ENCODE measurements at regions of chr3 and their contacts with region 1.

Region 1: DNA sequence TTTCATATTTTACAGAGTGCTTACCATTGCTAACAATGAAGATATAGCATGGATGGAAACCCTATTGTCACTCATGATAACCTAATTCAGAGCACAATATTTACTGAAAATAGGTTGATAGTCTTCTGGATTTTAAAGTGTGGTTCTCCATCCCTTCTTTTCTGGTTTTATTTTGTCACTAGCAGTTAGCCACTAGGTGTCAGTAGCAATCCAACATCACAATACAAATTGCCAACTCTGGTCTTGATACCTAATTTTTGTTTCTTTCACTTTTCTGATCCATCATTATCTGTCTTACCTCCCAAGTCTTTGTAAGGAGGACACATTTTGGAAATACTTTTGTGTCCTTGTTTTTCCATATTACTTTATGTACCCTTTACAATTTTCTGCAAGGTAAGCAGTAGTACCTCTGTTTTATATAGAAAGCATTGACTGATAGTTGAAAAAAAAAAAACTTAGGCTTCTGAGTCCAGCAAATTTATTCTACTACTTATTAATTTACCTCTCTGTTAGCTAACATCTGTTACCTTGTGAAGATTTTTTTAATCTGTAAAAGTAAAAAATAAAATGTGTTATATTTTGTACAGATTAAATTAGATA is 28.3 kb upstream of the CRYBG3 start:
- DNase-seq: peak in 1 of 2 experiments; percentile 27
- H3K4me3 ChIP-seq: no peak overlapping the region
- H3K4me3 Mint-ChIP-seq: no peak overlapping the region
- H3K27ac Mint-ChIP-seq: no peak overlapping the region
- H3K4me1 ChIP-seq: no peaks in the 10 kb centered on the region
- H3K4me1 Mint-ChIP-seq: no peaks in the 10 kb centered on the region
- H3K27me3 ChIP-seq: no peaks in the 10 kb centered on the region
- H3K27me3 Mint-ChIP-seq: no peaks in the 10 kb centered on the region
- CTCF ChIP-seq: peak; percentile 54 to 74

Region 2: GRCh38 chr3:97821810-97822775 is 28.6 kb after region 1 on chr3 and contains the start of gene CRYBG3:
- CTCF ChIA-PET with region 1: no interaction called
- POLR2A ChIA-PET with region 1: no interaction called
- intact Hi-C with region 1: loop called (anchors 1 kb)
- DNase-seq: peak; percentile 59 to 78
- H3K4me3 ChIP-seq: peak within 1 kb of the TSS; percentile 58
- H3K4me3 Mint-ChIP-seq: peak within 1 kb of the TSS; percentile 82
- H3K27ac Mint-ChIP-seq: peak within 1 kb of the TSS; percentile 34
- H3K4me1 ChIP-seq: no peaks in the 10 kb centered on the region
- H3K4me1 Mint-ChIP-seq: peaks cover 8% of the 10 kb centered on the region
- H3K27me3 ChIP-seq: peaks cover 2% of the 10 kb centered on the region; the same call in 1 of the 2 replicates
- H3K27me3 Mint-ChIP-seq: peaks cover 31% of the 10 kb centered on the region
- CTCF ChIP-seq: peak in 1 of 2 experiments; percentile 36
- total RNA-seq, gene CRYBG3: 1.3 TPM in 2 replicates

Region 3: GRCh38 chr3:97895216-97895615 is 101.7 kb after region 1 on chr3:
- CTCF ChIA-PET with region 1: no interaction called
- POLR2A ChIA-PET with region 1: no interaction called
- intact Hi-C with region 1: loop called (anchors 10 kb)
- DNase-seq: no peak
- H3K4me3 ChIP-seq: no peak overlapping the region
- H3K4me3 Mint-ChIP-seq: no peak overlapping the region
- H3K27ac Mint-ChIP-seq: no peak overlapping the region
- H3K4me1 ChIP-seq: no peaks in the 10 kb centered on the region
- H3K4me1 Mint-ChIP-seq: no peaks in the 10 kb centered on the region
- H3K27me3 ChIP-seq: no peaks in the 10 kb centered on the region
- H3K27me3 Mint-ChIP-seq: no peaks in the 10 kb centered on the region
- CTCF ChIP-seq: no peak

Region 4: GRCh38 chr3:97910931-97911351 is 117.4 kb after region 1 on chr3:
- CTCF ChIA-PET with region 1: no interaction called
- POLR2A ChIA-PET with region 1: no interaction called
- intact Hi-C with region 1: no loop called
- DNase-seq: no peak
- H3K4me3 ChIP-seq: no peak overlapping the region
- H3K4me3 Mint-ChIP-seq: peak overlapping the region; percentile 72
- H3K27ac Mint-ChIP-seq: peak overlapping the region; percentile 67
- H3K4me1 ChIP-seq: peaks cover 10% of the 10 kb centered on the region
- H3K4me1 Mint-ChIP-seq: no peaks in the 10 kb centered on the region
- H3K27me3 ChIP-seq: no peaks in the 10 kb centered on the region
- H3K27me3 Mint-ChIP-seq: no peaks in the 10 kb centered on the region
- CTCF ChIP-seq: no peak

Region 5: DNA sequence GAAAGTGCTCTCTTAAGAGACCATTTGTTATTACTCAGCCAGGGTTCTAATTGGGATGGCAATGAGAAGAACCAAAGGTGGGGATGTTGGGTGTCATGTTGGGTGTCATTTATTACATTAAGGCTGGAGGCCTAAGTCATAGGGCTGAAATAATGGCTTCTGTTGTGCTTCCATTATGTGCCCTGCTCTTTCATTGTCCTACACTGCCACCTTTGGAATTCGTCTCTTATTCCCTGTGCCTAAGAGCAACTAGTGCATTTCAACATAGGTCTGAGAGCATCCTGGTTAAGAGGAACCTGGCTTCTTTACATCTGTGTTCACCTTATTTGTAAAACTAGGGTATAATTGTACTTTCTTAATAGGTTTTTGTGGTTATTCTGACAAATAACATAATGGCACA is 146.5 kb after region 1 on chr3:
- CTCF ChIA-PET with region 1: no interaction called
- POLR2A ChIA-PET with region 1: no interaction called
- intact Hi-C with region 1: loop called (anchors 1 kb)
- DNase-seq: peak in 1 of 2 experiments; percentile 13
- H3K4me3 ChIP-seq: no peak overlapping the region
- H3K4me3 Mint-ChIP-seq: no peak overlapping the region
- H3K27ac Mint-ChIP-seq: no peak overlapping the region
- H3K4me1 ChIP-seq: no peaks in the 10 kb centered on the region; the same call in 1 of the 2 replicates
- H3K4me1 Mint-ChIP-seq: no peaks in the 10 kb centered on the region
- H3K27me3 ChIP-seq: no peaks in the 10 kb centered on the region
- H3K27me3 Mint-ChIP-seq: no peaks in the 10 kb centered on the region
- CTCF ChIP-seq: no peak

Region 6: DNA sequence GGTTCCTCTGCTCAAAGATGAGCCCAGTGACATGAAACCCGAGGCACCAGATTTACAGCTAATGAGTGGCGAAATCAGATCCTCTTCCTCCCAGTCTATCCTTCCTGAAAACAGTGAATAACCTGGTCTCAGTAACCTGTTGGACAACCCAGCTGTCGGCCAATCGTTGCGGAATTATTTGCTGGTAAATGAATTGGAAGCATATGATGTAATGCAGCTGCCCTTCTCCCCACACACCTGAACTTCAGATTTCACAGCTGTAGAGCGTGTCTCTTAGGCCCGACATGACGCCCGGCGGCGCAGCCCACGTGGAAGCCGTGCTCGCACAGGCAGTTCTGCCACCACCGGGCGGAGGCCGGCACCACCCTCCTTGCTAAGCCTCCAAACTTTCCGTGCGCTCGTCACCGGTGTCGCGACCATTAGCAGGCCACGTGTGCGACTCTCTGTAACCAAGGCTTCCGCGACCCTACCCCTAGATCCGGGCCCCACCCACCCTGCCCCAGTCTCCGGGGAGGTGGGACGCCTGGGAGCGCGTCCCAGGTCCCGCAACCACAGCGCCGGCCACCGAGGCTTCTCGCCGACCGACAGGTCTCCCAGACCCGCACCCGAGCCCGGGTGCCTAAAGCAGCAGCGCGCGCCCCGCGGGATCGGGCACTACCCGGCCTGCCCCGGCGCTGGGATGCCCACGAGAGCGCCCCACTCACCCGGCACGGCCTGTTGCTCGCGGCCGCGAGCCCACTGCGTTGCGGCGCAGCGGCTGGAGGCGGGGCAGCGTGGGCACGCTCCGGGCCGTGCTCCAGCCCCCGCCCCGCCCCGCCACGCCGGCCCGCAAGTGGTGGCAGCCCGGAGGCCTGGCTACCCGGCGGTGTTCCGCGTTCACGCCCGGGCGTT is 178.4 kb after region 1 on chr3 and contains the start of gene RIOX2:
- CTCF ChIA-PET with region 1: no interaction called
- POLR2A ChIA-PET with region 1: no interaction called
- intact Hi-C with region 1: loop called (anchors 1 kb)
- DNase-seq: peak; percentile 76 to 78
- H3K4me3 ChIP-seq: peak within 1 kb of the TSS; percentile 81
- H3K4me3 Mint-ChIP-seq: peak within 1 kb of the TSS; percentile 88
- H3K27ac Mint-ChIP-seq: peak within 1 kb of the TSS; percentile 94
- H3K4me1 ChIP-seq: peaks cover 20% of the 10 kb centered on the region
- H3K4me1 Mint-ChIP-seq: peaks cover 13% of the 10 kb centered on the region
- H3K27me3 ChIP-seq: no peaks in the 10 kb centered on the region
- H3K27me3 Mint-ChIP-seq: no peaks in the 10 kb centered on the region
- CTCF ChIP-seq: peak in 1 of 2 experiments; percentile 12
- total RNA-seq, gene RIOX2: 25.0 TPM in 2 replicates

Region 7: DNA sequence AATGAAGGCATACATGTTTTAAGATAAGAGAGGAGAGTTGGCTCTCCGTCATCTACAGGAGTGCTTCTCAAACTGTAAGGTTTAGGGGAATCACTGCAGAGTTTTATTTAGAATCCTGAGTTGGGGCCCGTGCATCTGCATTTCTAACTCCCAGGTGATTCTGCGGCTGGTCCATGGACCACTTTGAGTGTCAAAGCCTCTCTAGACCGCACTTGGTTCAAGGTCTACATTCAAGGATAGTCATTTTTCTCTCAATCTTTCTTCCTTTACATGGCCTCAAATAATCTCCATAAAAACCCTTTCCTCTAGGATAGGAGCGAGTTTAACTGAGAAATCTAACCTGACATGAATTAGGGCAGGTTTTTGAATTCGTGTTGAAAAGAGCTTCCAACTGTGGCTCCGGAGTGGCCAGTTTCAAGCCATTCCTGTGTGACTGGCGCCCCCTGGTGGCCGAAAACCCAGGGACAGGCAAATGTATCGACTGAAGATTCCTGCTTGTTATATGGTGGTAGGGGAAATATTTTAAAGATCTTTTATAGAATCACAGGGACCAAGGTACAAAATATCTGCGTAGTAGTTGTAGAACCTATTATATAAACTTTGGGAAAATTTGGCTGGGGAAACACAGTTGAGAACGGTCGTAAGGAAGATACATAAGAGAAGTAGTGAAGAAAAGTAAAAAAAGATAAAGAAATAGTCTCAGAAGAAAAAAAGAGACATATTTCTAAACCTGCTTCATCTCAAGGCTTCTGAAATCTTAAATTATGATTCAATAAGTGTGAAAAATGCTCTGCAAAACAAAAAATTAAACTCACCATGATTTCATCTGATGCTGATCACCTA is 229.7 kb after region 1 on chr3:
- CTCF ChIA-PET with region 1: no interaction called
- POLR2A ChIA-PET with region 1: no interaction called
- intact Hi-C with region 1: loop called (anchors 1 kb)
- DNase-seq: peak; percentile 75 to 89
- H3K4me3 ChIP-seq: no peak overlapping the region
- H3K4me3 Mint-ChIP-seq: no peak overlapping the region
- H3K27ac Mint-ChIP-seq: no peak overlapping the region
- H3K4me1 ChIP-seq: no peaks in the 10 kb centered on the region
- H3K4me1 Mint-ChIP-seq: peaks cover 7% of the 10 kb centered on the region
- H3K27me3 ChIP-seq: no peaks in the 10 kb centered on the region
- H3K27me3 Mint-ChIP-seq: peaks cover 4% of the 10 kb centered on the region
- CTCF ChIP-seq: peak; percentile 87 to 94